A549 (cell line): ENCODE measurements at regions of chr3 and their contacts with region 1.

Region 1: GRCh38 chr3:25594007-25594502 is 70.7 kb downstream of the TOP2B start:
- DNase-seq: peak in 1 of 2 experiments; percentile 69
- ATAC-seq: peak; percentile 47 to 59
- H3K4me3 ChIP-seq: no peak overlapping the region
- H3K27ac ChIP-seq: peak overlapping the region; percentile 91
- H3K4me1 ChIP-seq: peaks cover 54% of the 10 kb centered on the region
- CTCF ChIP-seq: peak; percentile 84
- EP300 ChIP-seq: no peak
- POLR2A ChIP-seq: no peak
- RAD21 ChIP-seq: peak; percentile 78 to 86

Region 2: GRCh38 chr3:24963762-24964625 is 630.1 kb before region 1 on chr3:
- CTCF ChIA-PET with region 1: interaction called, 17 read pairs
- POLR2A ChIA-PET with region 1: no interaction called
- DNase-seq: peak in 1 of 2 experiments; percentile 39
- ATAC-seq: peak; percentile 70 to 77; a peak in 4 of 6 replicates
- H3K4me3 ChIP-seq: no peak overlapping the region
- H3K27ac ChIP-seq: 0 out of 6 replicates have a peak overlapping the region, but pooled peaks of 1 of the 2 experiments have one; percentile 10
- H3K4me1 ChIP-seq: peaks cover 5% of the 10 kb centered on the region; the same call in 2 of the 3 replicates
- CTCF ChIP-seq: peak; percentile 80
- EP300 ChIP-seq: no peak
- POLR2A ChIP-seq: no peak
- RAD21 ChIP-seq: peak; percentile 70 to 80

Region 3: GRCh38 chr3:25021816-25022215 is 572.2 kb before region 1 on chr3:
- CTCF ChIA-PET with region 1: interaction called, 11 read pairs
- POLR2A ChIA-PET with region 1: no interaction called
- DNase-seq: peak in 1 of 2 experiments; percentile 34
- ATAC-seq: 0 out of 6 replicates have a peak, but pooled peaks have one; percentile 47 to 56
- H3K4me3 ChIP-seq: no peak overlapping the region
- H3K27ac ChIP-seq: no peak overlapping the region
- H3K4me1 ChIP-seq: no peaks in the 10 kb centered on the region
- CTCF ChIP-seq: peak; percentile 41
- EP300 ChIP-seq: no peak
- POLR2A ChIP-seq: no peak
- RAD21 ChIP-seq: peak; percentile 52 to 55

Region 4: DNA sequence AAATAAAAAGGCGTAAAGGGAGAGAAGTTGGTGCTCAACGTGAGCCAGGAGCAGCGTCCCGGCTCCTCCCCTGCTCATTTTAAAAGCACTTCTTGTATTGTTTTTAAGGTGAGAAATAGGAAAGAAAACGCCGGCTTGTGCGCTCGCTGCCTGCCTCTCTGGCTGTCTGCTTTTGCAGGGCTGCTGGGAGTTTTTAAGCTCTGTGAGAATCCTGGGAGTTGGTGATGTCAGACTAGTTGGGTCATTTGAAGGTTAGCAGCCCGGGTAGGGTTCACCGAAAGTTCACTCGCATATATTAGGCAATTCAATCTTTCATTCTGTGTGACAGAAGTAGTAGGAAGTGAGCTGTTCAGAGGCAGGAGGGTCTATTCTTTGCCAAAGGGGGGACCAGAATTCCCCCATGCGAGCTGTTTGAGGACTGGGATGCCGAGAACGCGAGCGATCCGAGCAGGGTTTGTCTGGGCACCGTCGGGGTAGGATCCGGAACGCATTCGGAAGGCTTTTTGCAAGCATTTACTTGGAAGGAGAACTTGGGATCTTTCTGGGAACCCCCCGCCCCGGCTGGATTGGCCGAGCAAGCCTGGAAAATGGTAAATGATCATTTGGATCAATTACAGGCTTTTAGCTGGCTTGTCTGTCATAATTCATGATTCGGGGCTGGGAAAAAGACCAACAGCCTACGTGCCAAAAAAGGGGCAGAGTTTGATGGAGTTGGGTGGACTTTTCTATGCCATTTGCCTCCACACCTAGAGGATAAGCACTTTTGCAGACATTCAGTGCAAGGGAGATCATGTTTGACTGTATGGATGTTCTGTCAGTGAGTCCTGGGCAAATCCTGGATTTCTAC is 165.9 kb before region 1 on chr3 and contains the start of gene RARB:
- CTCF ChIA-PET with region 1: interaction called, 10 read pairs
- POLR2A ChIA-PET with region 1: interaction called, 46 read pairs
- DNase-seq: peak; percentile 80 to 95
- ATAC-seq: peak; percentile 72
- H3K4me3 ChIP-seq: peak within 1 kb of the TSS; percentile 68
- H3K27ac ChIP-seq: peak within 1 kb of the TSS; percentile 92
- H3K4me1 ChIP-seq: peaks cover 48% of the 10 kb centered on the region
- CTCF ChIP-seq: no peak
- EP300 ChIP-seq: peak in 1 of 2 experiments; percentile 50; a peak in 2 of 5 replicates
- POLR2A ChIP-seq: peak; percentile 95
- RAD21 ChIP-seq: peak; percentile 12 to 31; a peak in 1 of 5 replicates
- polyA plus RNA-seq, gene RARB: 30.8 and 31.9 TPM in 2 replicates

Region 5: GRCh38 chr3:25441234-25441856 is 152.7 kb before region 1 on chr3:
- CTCF ChIA-PET with region 1: interaction called, 15 read pairs
- POLR2A ChIA-PET with region 1: interaction called, 3 read pairs
- DNase-seq: no peak
- ATAC-seq: 0 out of 6 replicates have a peak, but pooled peaks of 1 of the 2 experiments have one; percentile 22
- H3K4me3 ChIP-seq: no peak overlapping the region
- H3K27ac ChIP-seq: no peak overlapping the region
- H3K4me1 ChIP-seq: peaks cover 48% of the 10 kb centered on the region
- CTCF ChIP-seq: peak; percentile 73
- EP300 ChIP-seq: no peak
- POLR2A ChIP-seq: no peak
- RAD21 ChIP-seq: peak; percentile 13 to 19; a peak in 1 of 5 replicates

Region 6: DNA sequence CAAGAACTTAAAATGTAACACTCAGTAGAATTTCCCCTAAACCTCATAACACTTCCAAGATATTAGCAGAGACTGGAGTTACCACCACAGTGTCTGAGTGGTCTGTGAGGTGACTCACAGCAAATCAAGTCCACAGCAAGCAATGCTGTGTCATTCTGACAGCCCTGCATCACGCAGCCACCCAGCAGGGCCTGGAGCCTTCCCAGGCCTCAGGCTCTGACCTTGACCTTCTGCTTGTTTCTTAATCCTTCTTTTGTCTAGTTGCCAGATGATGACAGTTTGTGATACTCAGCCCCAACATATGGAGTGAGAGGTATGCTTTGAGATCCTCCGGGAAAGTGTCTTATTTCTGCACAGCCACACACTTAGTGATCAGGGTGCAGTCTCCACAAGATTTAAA is 11.8 kb before region 1 on chr3:
- CTCF ChIA-PET with region 1: interaction called, 45 read pairs
- POLR2A ChIA-PET with region 1: interaction called, 3 read pairs
- DNase-seq: peak; percentile 87 to 95
- ATAC-seq: peak; percentile 98
- H3K4me3 ChIP-seq: no peak overlapping the region
- H3K27ac ChIP-seq: peak overlapping the region; percentile 87 to 97
- H3K4me1 ChIP-seq: peaks cover 47% of the 10 kb centered on the region
- CTCF ChIP-seq: no peak
- EP300 ChIP-seq: peak; percentile 75 to 78; a peak in 3 of 5 replicates
- POLR2A ChIP-seq: no peak
- RAD21 ChIP-seq: peak in 1 of 2 experiments; percentile 45; a peak in 3 of 5 replicates

Region 7: GRCh38 chr3:25604107-25604805 is 10.2 kb after region 1 on chr3:
- CTCF ChIA-PET with region 1: interaction called, 24 read pairs
- POLR2A ChIA-PET with region 1: no interaction called
- DNase-seq: peak in 1 of 2 experiments; percentile 34
- ATAC-seq: peak; percentile 86 to 88
- H3K4me3 ChIP-seq: no peak overlapping the region
- H3K27ac ChIP-seq: peak overlapping the region in 1 of 2 experiments; percentile 45; a peak in 2 of 6 replicates
- H3K4me1 ChIP-seq: peaks cover 13% of the 10 kb centered on the region
- CTCF ChIP-seq: no peak
- EP300 ChIP-seq: no peak
- POLR2A ChIP-seq: no peak
- RAD21 ChIP-seq: no peak